B cell (primary cell): ENCODE measurements at regions of chrX and their contacts with region 1.

Region 1: GRCh38 chrX:3638280-3638873 is 75.1 kb downstream of the PRKX start:
- DNase-seq: peak; percentile 38
- ATAC-seq: no peak
- H3K4me3 ChIP-seq: no peak overlapping the region
- H3K4me3 Mint-ChIP-seq: no peak overlapping the region
- H3K27ac ChIP-seq: no peak overlapping the region
- H3K27ac Mint-ChIP-seq: no peak overlapping the region
- H3K4me1 ChIP-seq: peaks cover 0 to 3% of the 10 kb centered on the region in 2 donors
- H3K4me1 Mint-ChIP-seq: peaks cover 2% of the 10 kb centered on the region
- H3K27me3 ChIP-seq: no peaks in the 10 kb centered on the region
- H3K27me3 Mint-ChIP-seq: no peaks in the 10 kb centered on the region
- CTCF ChIP-seq: peak; percentile 47

Region 2: GRCh38 chrX:3621414-3621813 is 17.0 kb before region 1 on chrX:
- CTCF ChIA-PET with region 1: no interaction called
- POLR2A ChIA-PET with region 1: no interaction called
- intact Hi-C with region 1: loop called (anchors 1 kb)
- DNase-seq: no peak
- ATAC-seq: no peak
- H3K4me3 ChIP-seq: no peak overlapping the region
- H3K4me3 Mint-ChIP-seq: no peak overlapping the region
- H3K27ac ChIP-seq: no peak overlapping the region
- H3K27ac Mint-ChIP-seq: no peak overlapping the region
- H3K4me1 ChIP-seq: no peaks in the 10 kb centered on the region
- H3K4me1 Mint-ChIP-seq: no peaks in the 10 kb centered on the region
- H3K27me3 ChIP-seq: no peaks in the 10 kb centered on the region
- H3K27me3 Mint-ChIP-seq: no peaks in the 10 kb centered on the region
- CTCF ChIP-seq: no peak

Region 3: DNA sequence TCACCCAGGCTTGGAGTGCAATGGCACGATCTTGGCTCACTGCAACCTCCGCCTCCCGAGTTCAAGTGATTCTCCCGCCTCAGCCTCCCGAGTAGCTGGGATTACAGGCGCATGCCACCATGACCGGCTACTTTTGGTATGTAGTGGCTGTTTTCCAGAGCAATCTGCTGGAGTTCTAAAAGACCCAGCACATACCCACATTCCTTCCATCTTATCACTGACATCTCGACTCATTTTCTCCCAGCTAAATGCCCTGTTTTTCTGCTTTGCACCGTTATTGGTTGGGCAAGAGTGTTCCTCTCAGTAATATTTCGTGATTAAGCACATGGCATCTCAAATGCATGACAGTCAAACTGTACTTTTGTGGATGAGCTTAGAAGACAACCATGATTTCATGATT is 21.4 kb after region 1 on chrX:
- CTCF ChIA-PET with region 1: no interaction called
- POLR2A ChIA-PET with region 1: no interaction called
- intact Hi-C with region 1: no loop called
- DNase-seq: no peak
- ATAC-seq: no peak
- H3K4me3 ChIP-seq: no peak overlapping the region
- H3K4me3 Mint-ChIP-seq: no peak overlapping the region
- H3K27ac ChIP-seq: no peak overlapping the region
- H3K27ac Mint-ChIP-seq: no peak overlapping the region
- H3K4me1 ChIP-seq: peaks cover 11 to 21% of the 10 kb centered on the region in 2 donors
- H3K4me1 Mint-ChIP-seq: peaks cover 21% of the 10 kb centered on the region
- H3K27me3 ChIP-seq: no peaks in the 10 kb centered on the region
- H3K27me3 Mint-ChIP-seq: no peaks in the 10 kb centered on the region
- CTCF ChIP-seq: no peak

Region 4: GRCh38 chrX:4994855-4995254 is 1356.5 kb after region 1 on chrX:
- CTCF ChIA-PET with region 1: no interaction called
- POLR2A ChIA-PET with region 1: no interaction called
- intact Hi-C with region 1: no loop called
- DNase-seq: no peak
- ATAC-seq: no peak
- H3K4me3 ChIP-seq: no peak overlapping the region
- H3K4me3 Mint-ChIP-seq: no peak overlapping the region
- H3K27ac ChIP-seq: no peak overlapping the region
- H3K27ac Mint-ChIP-seq: no peak overlapping the region
- H3K4me1 ChIP-seq: no peaks in the 10 kb centered on the region
- H3K4me1 Mint-ChIP-seq: no peaks in the 10 kb centered on the region
- H3K27me3 ChIP-seq: no peaks in the 10 kb centered on the region
- H3K27me3 Mint-ChIP-seq: no peaks in the 10 kb centered on the region
- CTCF ChIP-seq: no peak